Activated CD4-positive, alpha-beta T cell treated with anti-CD3 and anti-CD28 coated beads for 36 hours (primary cell): ENCODE measurements at regions of chr7 and their contacts with region 1.

Region 1: DNA sequence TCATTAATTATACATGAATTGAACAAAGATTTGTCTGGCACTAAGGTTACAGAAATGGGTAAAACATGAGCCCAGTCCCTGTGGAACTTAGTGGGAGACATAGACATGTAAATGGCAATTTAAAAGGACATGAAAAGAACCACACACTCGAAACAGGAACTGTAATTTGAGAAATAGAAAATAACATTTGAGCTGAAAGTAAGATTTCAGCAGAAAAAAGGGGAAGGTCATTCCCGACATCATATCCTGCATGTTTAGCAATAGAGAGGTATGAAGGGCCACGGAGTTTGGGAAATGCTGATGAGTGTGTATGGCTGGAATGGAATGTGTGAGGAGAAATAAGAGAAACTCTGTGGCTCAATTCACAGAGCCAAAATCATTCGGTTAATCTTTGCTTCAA is 175.4 kb upstream of the AHR start:
- DNase-seq: no peak
- ATAC-seq: no peak
- H3K4me3 Mint-ChIP-seq: no peak overlapping the region
- H3K27ac Mint-ChIP-seq: no peak overlapping the region
- H3K4me1 Mint-ChIP-seq: peaks cover 30% of the 10 kb centered on the region
- H3K27me3 Mint-ChIP-seq: no peaks in the 10 kb centered on the region

Region 2: DNA sequence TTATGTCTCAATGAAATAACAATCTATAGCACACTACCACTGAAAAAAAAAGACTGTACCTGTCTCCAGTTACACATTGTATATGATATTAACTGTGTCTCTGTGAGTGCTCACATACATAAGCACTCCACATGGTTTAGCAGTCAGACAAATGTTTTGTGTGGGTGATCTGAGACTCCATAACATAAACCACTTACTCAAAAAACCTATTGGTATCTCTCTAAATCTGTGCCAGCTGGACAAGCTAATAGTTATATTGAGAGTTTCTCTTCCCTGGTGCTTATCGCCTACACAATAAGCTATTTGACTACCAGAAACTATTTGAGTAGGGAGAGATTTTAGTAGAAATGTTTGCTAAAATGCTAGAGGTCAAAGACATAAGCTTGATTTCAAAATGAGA is 51.2 kb before region 1 on chr7:
- CTCF ChIA-PET with region 1: no interaction called
- POLR2A ChIA-PET with region 1: no interaction called
- intact Hi-C with region 1: loop called in 1 of 2 experiments (anchors 5 kb)
- DNase-seq: no peak
- ATAC-seq: no peak
- H3K4me3 Mint-ChIP-seq: no peak overlapping the region
- H3K27ac Mint-ChIP-seq: no peak overlapping the region
- H3K4me1 Mint-ChIP-seq: peaks cover 7% of the 10 kb centered on the region
- H3K27me3 Mint-ChIP-seq: peaks cover 2% of the 10 kb centered on the region

Region 3: GRCh38 chr7:17185690-17186070 is 62.7 kb after region 1 on chr7:
- CTCF ChIA-PET with region 1: no interaction called
- POLR2A ChIA-PET with region 1: no interaction called
- intact Hi-C with region 1: loop called in 1 of 2 experiments (anchors 2 kb)
- DNase-seq: no peak
- ATAC-seq: peak; percentile 78
- H3K4me3 Mint-ChIP-seq: no peak overlapping the region
- H3K27ac Mint-ChIP-seq: no peak overlapping the region
- H3K4me1 Mint-ChIP-seq: peaks cover 23% of the 10 kb centered on the region
- H3K27me3 Mint-ChIP-seq: no peaks in the 10 kb centered on the region

Region 4: GRCh38 chr7:17380736-17381662 is 258.0 kb after region 1 on chr7:
- CTCF ChIA-PET with region 1: no interaction called
- POLR2A ChIA-PET with region 1: no interaction called
- intact Hi-C with region 1: no loop called
- DNase-seq: no peak
- ATAC-seq: no peak
- H3K4me3 Mint-ChIP-seq: no peak overlapping the region
- H3K27ac Mint-ChIP-seq: no peak overlapping the region
- H3K4me1 Mint-ChIP-seq: no peaks in the 10 kb centered on the region
- H3K27me3 Mint-ChIP-seq: peaks cover 2% of the 10 kb centered on the region